ENCODE measurements at regions of chr4 and their contacts with region 1.

Region 1: GRCh38 chr4:85147439-85148076 is 181.1 kb upstream of the WDFY3 start:
- DNase-seq: peak; percentile 68
- ATAC-seq: peak; percentile 79
- H3K4me3 ChIP-seq: no peak overlapping the region
- H3K27ac ChIP-seq: no peak overlapping the region
- H3K4me1 ChIP-seq: no peaks in the 10 kb centered on the region
- H3K27me3 ChIP-seq: peaks cover 3% of the 10 kb centered on the region; the same call in 1 of the 2 replicates
- CTCF ChIP-seq: peak; percentile 69

Region 2: GRCh38 chr4:85243857-85244256 is 96.3 kb after region 1 on chr4:
- CTCF ChIA-PET with region 1: no interaction called
- POLR2A ChIA-PET with region 1: no interaction called
- intact Hi-C with region 1: loop called (anchors 10 kb)
- DNase-seq: peak; percentile 3
- ATAC-seq: peak; percentile 61
- H3K4me3 ChIP-seq: no peak overlapping the region
- H3K27ac ChIP-seq: no peak overlapping the region
- H3K4me1 ChIP-seq: no peaks in the 10 kb centered on the region
- H3K27me3 ChIP-seq: no peaks in the 10 kb centered on the region
- CTCF ChIP-seq: no peak

Region 3: GRCh38 chr4:85318415-85318814 is 170.9 kb after region 1 on chr4:
- CTCF ChIA-PET with region 1: no interaction called
- POLR2A ChIA-PET with region 1: no interaction called
- intact Hi-C with region 1: loop called (anchors 1 kb)
- DNase-seq: peak; percentile 19
- ATAC-seq: peak; percentile 29; the same call in 1 of the 2 replicates
- H3K4me3 ChIP-seq: no peak overlapping the region
- H3K27ac ChIP-seq: no peak overlapping the region
- H3K4me1 ChIP-seq: no peaks in the 10 kb centered on the region
- H3K27me3 ChIP-seq: no peaks in the 10 kb centered on the region
- CTCF ChIP-seq: no peak

Region 4: DNA sequence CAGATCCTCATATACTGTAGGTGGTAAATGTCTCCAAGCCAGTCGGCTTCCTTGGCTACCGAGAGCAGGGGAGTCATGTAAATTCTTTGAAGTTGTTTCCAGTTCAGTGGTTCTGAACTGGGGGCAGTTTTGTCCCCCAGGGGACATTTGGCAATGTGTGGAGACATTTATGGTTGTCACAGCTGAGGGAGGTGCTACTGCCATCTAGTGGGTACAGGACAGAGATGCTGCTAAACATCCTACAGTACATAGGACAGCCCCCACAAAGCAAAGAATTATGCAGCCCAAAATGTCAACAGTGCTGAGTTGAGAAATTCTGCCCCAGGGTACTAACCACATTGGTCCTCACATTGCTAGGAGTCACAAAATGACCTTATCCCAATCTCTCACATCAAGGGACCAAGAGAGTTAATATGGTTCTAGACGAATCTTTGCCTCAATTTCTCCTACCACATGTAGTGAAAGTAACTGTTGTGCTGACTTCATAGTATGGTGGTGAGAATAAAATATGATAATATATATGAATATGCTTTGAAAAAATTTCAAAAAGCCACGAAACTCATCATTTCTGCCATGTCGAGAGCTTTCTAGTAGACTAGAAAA is 223.0 kb after region 1 on chr4:
- CTCF ChIA-PET with region 1: no interaction called
- POLR2A ChIA-PET with region 1: no interaction called
- intact Hi-C with region 1: loop called (anchors 1 kb)
- DNase-seq: peak; percentile 49
- ATAC-seq: peak; percentile 81
- H3K4me3 ChIP-seq: no peak overlapping the region
- H3K27ac ChIP-seq: no peak overlapping the region
- H3K4me1 ChIP-seq: no peaks in the 10 kb centered on the region
- H3K27me3 ChIP-seq: 0 out of 2 replicates have a peak, but pooled peaks cover 1% of the 10 kb centered on the region
- CTCF ChIP-seq: peak; percentile 76

Measured in PC-3 (cell line).